CD4-positive, alpha-beta memory T cell (primary cell): ENCODE measurements at regions of chr6 and their contacts with region 1.

Region 1: GRCh38 chr6:136317021-136317694 is 27.5 kb upstream of the BCLAF1 start:
- DNase-seq: peak; percentile 68 to 72 (median 69)
- H3K4me3 ChIP-seq: no peak overlapping the region
- H3K4me3 Mint-ChIP-seq: no peak overlapping the region
- H3K27ac ChIP-seq: no peak overlapping the region
- H3K27ac Mint-ChIP-seq: peak overlapping the region in 2 of 7 donors; percentile 35 to 77
- H3K4me1 ChIP-seq: no peaks in the 10 kb centered on the region
- H3K4me1 Mint-ChIP-seq: peaks cover 0 to 4% (median 1%) of the 10 kb centered on the region in 4 donors
- H3K27me3 ChIP-seq: no peaks in the 10 kb centered on the region
- H3K27me3 Mint-ChIP-seq: peaks cover 0 to 5% of the 10 kb centered on the region in 2 donors

Region 2: DNA sequence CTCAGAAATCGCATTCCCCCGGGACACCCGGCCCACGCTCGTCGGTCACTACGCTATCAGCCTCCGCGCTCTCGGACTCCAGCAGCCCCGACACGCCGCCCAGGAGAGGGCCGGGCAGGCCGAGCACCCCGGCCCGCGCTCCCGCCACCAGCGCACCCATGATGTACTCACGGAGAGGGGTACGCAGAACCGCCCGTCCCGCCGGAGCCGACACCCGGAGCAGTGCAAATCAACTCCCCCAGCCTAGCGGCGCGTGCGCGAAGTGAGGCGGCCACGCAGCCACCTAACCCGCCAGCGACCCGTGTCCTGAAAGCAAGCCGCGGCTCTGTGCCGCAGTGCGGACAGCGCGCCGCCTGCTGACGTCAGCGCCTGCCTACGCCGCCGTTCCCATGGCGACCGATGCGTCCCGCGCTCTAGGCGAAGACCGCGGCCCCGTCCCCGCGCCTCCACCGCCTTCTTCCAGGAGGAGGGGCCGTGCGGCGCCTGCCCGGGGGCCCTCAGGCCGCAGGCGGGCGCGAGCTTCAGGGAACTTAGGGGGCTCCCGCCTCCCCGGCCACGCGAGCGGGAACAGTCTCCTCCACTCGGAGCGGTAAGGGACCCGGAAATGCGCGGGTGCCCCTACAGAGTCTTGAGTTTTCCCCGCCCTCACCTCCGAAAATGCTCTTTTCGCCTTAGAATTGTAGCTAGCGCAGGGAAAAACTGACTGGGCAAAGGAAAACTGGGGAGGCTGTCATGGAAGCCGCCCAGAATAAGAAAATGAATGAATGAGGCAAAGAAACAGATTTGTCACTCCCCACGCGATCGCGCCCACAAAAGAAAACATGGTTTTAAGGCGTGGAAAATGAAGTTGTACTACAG is 819.5 kb before region 1 on chr6 and contains the start of gene AHI1:
- CTCF ChIA-PET with region 1: no interaction called
- POLR2A ChIA-PET with region 1: no interaction called
- intact Hi-C with region 1: loop called (anchors 2 kb)
- DNase-seq: peak; percentile 86 to 92 (median 89)
- H3K4me3 ChIP-seq: peak within 1 kb of the TSS; percentile 32 to 97
- H3K4me3 Mint-ChIP-seq: peak within 1 kb of the TSS in 3 of 8 donors; percentile 29 to 95 (median 59)
- H3K27ac ChIP-seq: peak within 1 kb of the TSS; percentile 87
- H3K27ac Mint-ChIP-seq: peak within 1 kb of the TSS in 3 of 7 donors; percentile 21 to 69 (median 28)
- H3K4me1 ChIP-seq: peaks cover 15% of the 10 kb centered on the region
- H3K4me1 Mint-ChIP-seq: peaks cover 5 to 9% (median 6%) of the 10 kb centered on the region in 4 donors
- H3K27me3 ChIP-seq: no peaks in the 10 kb centered on the region
- H3K27me3 Mint-ChIP-seq: no peaks in the 10 kb centered on the region
- total RNA-seq, gene AHI1: 12.2 to 12.8 TPM

Region 3: GRCh38 chr6:135506270-135506997 is 810.7 kb before region 1 on chr6:
- CTCF ChIA-PET with region 1: interaction called, 12 read pairs
- POLR2A ChIA-PET with region 1: no interaction called
- intact Hi-C with region 1: no loop called
- DNase-seq: peak; percentile 39 to 46 (median 40)
- H3K4me3 ChIP-seq: no peak overlapping the region
- H3K4me3 Mint-ChIP-seq: peak overlapping the region in 3 of 8 donors; percentile 13 to 39 (median 20)
- H3K27ac ChIP-seq: no peak overlapping the region
- H3K27ac Mint-ChIP-seq: no peak overlapping the region
- H3K4me1 ChIP-seq: no peaks in the 10 kb centered on the region
- H3K4me1 Mint-ChIP-seq: peaks cover 0 to 5% (median under 1%) of the 10 kb centered on the region in 4 donors
- H3K27me3 ChIP-seq: no peaks in the 10 kb centered on the region
- H3K27me3 Mint-ChIP-seq: no peaks in the 10 kb centered on the region

Region 4: GRCh38 chr6:135535989-135536414 is 781.2 kb before region 1 on chr6:
- CTCF ChIA-PET with region 1: interaction called, 3 read pairs
- POLR2A ChIA-PET with region 1: no interaction called
- intact Hi-C with region 1: loop called (anchors 1 kb)
- DNase-seq: peak in 4 of 5 donors; percentile 38 to 47 (median 40)
- H3K4me3 ChIP-seq: no peak overlapping the region
- H3K4me3 Mint-ChIP-seq: peak overlapping the region in 5 of 8 donors; percentile 24 to 57 (median 35)
- H3K27ac ChIP-seq: no peak overlapping the region
- H3K27ac Mint-ChIP-seq: peak overlapping the region in 1 of 7 donors; percentile 2
- H3K4me1 ChIP-seq: no peaks in the 10 kb centered on the region
- H3K4me1 Mint-ChIP-seq: peaks cover 2 to 6% (median 4%) of the 10 kb centered on the region in 4 donors
- H3K27me3 ChIP-seq: no peaks in the 10 kb centered on the region
- H3K27me3 Mint-ChIP-seq: peaks cover 0 to 7% of the 10 kb centered on the region in 2 donors

Region 5: DNA sequence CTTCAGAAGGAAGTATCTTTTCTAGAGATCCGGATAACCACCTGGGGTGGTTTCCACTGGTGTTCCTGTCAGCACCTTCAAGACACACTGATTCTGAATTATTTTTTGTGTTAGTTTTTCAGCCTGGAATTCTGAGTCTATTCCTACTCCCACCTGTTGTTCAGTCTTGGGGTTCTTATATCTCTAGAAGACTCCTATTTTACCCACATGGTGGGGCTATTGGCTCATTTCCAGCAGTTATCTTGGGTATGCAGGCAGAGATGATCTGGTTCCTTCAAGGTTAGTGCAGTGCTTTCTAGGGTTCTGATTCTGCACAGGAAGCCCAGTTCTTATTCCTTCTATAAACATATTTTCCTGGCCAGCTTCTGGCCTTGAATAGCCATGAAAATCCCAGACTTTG is 641.3 kb before region 1 on chr6:
- CTCF ChIA-PET with region 1: interaction called, 12 read pairs
- POLR2A ChIA-PET with region 1: no interaction called
- intact Hi-C with region 1: no loop called
- DNase-seq: peak; percentile 36 to 50 (median 48)
- H3K4me3 ChIP-seq: no peak overlapping the region
- H3K4me3 Mint-ChIP-seq: no peak overlapping the region
- H3K27ac ChIP-seq: no peak overlapping the region
- H3K27ac Mint-ChIP-seq: peak overlapping the region in 1 of 7 donors; percentile 14
- H3K4me1 ChIP-seq: no peaks in the 10 kb centered on the region
- H3K4me1 Mint-ChIP-seq: no peaks in the 10 kb centered on the region
- H3K27me3 ChIP-seq: no peaks in the 10 kb centered on the region
- H3K27me3 Mint-ChIP-seq: no peaks in the 10 kb centered on the region

Region 6: GRCh38 chr6:136249811-136250685 is 67.1 kb before region 1 on chr6 and contains the start of gene MTFR2:
- CTCF ChIA-PET with region 1: interaction called, 4 read pairs
- POLR2A ChIA-PET with region 1: interaction called, 3 read pairs
- intact Hi-C with region 1: loop called (anchors 2 kb)
- DNase-seq: peak; percentile 94 to 98 (median 96)
- H3K4me3 ChIP-seq: peak within 1 kb of the TSS; percentile 82 to 83
- H3K4me3 Mint-ChIP-seq: peak within 1 kb of the TSS; percentile 91 to 99 (median 96)
- H3K27ac ChIP-seq: peak within 1 kb of the TSS; percentile 57
- H3K27ac Mint-ChIP-seq: peak within 1 kb of the TSS; percentile 74 to 96 (median 88)
- H3K4me1 ChIP-seq: peaks cover 21% of the 10 kb centered on the region
- H3K4me1 Mint-ChIP-seq: peaks cover 24 to 43% (median 34%) of the 10 kb centered on the region in 4 donors
- H3K27me3 ChIP-seq: no peaks in the 10 kb centered on the region
- H3K27me3 Mint-ChIP-seq: no peaks in the 10 kb centered on the region
- total RNA-seq, gene MTFR2: 1.2 TPM

Region 7: GRCh38 chr6:136274062-136274461 is 43.1 kb before region 1 on chr6:
- CTCF ChIA-PET with region 1: interaction called, 6 read pairs
- POLR2A ChIA-PET with region 1: no interaction called
- intact Hi-C with region 1: loop called (anchors 2 kb)
- DNase-seq: no peak
- H3K4me3 ChIP-seq: no peak overlapping the region
- H3K4me3 Mint-ChIP-seq: no peak overlapping the region
- H3K27ac ChIP-seq: no peak overlapping the region
- H3K27ac Mint-ChIP-seq: peak overlapping the region in 1 of 7 donors; percentile 41
- H3K4me1 ChIP-seq: peaks cover 12% of the 10 kb centered on the region
- H3K4me1 Mint-ChIP-seq: peaks cover 18 to 48% (median 35%) of the 10 kb centered on the region in 4 donors
- H3K27me3 ChIP-seq: no peaks in the 10 kb centered on the region
- H3K27me3 Mint-ChIP-seq: no peaks in the 10 kb centered on the region